HAP-1 (cell line): ENCODE measurements at regions of chr15 and their contacts with region 1.

Region 1: DNA sequence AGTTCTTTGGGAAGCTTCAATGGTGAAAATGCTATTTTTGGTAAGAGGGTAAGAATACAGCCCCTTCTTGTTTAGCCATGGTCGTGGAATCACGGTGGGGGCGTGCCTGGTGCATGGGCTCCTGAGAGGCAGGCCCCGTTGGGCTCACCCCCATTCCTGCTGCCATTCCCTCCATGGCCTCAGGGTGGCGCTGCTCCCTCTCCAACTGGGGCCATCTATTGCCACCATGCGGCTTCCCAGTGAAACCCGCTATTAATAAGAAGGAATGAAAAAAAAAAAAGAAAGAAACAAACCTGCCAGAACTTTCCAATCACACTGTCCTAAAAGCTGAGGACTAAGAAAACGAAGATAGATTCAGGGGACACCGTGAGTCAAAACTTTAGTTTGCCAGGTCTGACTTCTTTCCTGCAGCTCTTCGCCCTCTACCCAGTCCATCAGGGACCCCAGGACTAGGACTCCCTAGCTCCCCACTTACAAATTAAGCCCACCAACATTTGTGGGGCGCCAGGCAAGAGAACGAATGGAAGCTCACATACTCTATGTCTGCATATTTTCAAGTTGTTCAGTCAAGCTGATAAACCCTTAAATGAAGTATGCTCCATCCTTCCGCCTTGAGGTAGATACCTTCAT is 30.6 kb upstream of the ABHD2 start:
- DNase-seq: peak; percentile 78 to 97
- H3K4me3 ChIP-seq: no peak overlapping the region
- H3K4me1 ChIP-seq: peaks cover 3% of the 10 kb centered on the region; the same call in 1 of the 2 replicates
- H3K27me3 ChIP-seq: no peaks in the 10 kb centered on the region

Region 2: DNA sequence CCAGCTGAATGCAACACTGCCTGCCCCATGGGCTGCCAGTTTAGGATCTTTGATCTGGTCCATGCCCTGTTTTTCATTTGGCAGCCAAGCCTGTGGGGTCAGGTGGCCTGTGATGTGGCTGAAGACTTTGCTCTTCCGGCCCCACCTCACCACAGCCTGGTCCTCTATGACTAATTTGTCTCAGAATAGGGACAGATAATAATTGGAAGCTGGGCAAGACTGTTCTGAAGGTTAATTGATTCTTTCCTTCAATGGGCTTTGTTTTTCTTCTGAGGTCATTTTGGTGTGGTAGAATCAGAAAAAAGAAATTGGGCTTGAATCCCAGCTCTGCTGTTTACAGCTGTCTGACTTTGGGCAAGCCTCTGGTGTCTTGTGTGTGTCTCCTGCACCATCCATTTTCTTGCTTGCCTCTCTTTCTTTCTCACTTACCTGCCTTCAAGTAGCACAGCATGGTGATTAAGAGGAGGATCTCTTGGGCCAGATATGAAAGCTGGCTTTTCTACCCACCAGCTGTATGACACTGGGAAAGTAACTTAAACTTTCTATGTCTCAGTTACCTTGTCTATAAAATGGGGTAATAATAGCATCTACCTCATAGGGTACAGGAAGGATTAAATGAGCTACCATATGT is 54.8 kb after region 1 on chr15:
- in situ Hi-C with region 1: no loop called
- DNase-seq: no peak
- H3K4me3 ChIP-seq: no peak overlapping the region
- H3K4me1 ChIP-seq: no peaks in the 10 kb centered on the region
- H3K27me3 ChIP-seq: no peaks in the 10 kb centered on the region

Region 3: DNA sequence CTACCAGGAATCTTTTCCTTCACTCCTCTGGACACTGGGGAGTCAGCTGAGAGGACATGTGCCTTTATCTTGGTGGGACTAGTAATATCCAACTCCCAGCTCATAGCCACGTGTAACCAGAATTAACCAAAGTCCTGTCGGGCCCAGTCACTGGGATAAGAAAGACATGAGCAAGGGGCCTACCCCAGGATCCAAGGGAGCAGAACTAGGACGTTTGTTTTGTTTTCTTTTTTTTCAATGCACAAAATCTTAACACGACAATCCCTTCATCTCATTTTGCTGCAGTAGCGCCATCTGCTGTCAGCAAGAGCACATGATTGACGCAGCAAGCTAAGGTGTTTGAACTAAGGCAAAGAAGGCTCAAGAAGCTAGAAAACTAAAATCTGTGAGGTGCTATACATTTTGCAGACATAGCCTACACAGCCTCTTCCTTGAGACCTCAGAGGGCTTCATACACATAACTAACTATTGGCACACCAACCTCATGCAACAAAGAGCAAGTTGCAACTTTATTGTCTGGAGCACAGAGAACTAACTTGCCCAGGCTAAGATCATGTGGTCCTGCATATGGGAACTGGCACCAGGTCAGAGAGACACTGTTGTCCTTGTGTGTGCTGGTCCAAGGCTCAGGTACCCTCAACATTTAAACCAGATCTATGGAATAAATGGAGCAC is 120.2 kb after region 1 on chr15:
- in situ Hi-C with region 1: loop called (anchors 5 kb)
- DNase-seq: peak; percentile 89 to 95
- H3K4me3 ChIP-seq: no peak overlapping the region
- H3K4me1 ChIP-seq: no peaks in the 10 kb centered on the region
- H3K27me3 ChIP-seq: no peaks in the 10 kb centered on the region